Posterior vena cava (tissue), 2 donors: ENCODE measurements at regions of chr10 and their contacts with region 1.

Region 1: DNA sequence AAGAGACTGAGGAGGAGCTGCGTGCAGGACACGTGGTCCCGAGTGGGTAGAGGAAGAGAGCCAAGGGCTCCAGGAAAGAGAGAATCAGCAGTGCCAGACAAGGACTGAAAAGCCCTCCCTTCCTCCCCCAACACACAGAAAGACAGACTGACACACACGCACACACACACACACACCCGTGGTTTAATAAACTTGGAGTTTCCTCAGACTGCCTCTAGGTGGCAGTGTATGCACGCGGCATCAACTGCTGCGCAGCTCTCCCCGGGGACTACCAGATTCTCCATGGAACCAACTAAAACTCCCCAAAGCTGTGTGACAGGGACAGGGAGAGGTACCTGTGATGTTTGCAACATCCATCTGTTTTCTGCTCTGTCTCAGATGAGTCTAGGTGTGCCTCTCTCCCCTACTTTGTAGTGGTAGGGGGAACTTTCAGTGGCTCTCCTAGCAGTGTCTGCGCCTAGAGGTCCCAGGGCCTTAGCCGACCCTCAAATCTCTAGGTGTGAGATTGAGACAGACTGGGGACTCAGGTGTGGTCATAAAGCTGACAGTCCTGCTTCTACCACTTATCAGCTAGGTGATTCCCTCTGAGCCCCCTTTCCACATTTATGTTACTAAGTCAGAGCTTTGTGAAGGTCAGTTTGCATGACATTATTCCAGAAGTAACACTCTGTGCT is 9.3 kb upstream of the TSPAN14 start:
- DNase-seq: peak; percentile 89

Region 2: DNA sequence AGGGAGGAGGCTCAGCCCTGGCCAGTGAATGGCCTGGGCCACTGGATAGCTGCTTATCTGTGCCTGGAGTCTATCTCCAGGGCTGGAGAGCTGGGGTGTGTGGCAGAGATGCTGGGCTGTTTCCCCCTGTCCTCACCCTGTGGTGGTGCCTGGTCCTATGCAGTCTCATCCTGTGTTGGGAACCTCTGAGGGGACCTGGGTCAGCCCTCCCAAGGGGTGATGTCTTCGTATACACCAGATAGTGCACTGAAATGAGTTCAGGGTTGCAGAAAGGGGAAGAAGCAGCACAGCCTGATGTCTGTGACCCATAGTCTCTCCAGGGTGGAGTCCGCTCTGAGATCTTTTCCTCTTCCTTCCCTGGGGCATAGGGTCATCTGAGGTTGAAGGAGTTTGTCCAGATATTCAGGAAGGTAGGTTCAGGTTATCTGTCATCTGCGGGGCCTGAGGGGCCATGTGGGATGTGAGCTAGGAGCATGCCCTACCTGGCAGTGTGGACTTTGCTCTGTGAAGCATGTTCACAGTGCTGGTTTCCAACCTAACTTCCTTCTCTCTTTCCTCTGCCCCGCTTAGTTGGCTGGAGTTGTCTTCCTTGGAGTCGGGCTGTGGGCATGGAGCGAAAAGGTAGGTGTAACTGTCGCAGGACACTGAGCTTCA is 59.5 kb after region 1 on chr10:
- intact Hi-C with region 1: loop called (anchors 2 to 5 kb)
- DNase-seq: no peak

Region 3: GRCh38 chr10:80509403-80510161 is 64.8 kb after region 1 on chr10:
- intact Hi-C with region 1: loop called (anchors 2 to 5 kb)
- DNase-seq: no peak

Region 4: DNA sequence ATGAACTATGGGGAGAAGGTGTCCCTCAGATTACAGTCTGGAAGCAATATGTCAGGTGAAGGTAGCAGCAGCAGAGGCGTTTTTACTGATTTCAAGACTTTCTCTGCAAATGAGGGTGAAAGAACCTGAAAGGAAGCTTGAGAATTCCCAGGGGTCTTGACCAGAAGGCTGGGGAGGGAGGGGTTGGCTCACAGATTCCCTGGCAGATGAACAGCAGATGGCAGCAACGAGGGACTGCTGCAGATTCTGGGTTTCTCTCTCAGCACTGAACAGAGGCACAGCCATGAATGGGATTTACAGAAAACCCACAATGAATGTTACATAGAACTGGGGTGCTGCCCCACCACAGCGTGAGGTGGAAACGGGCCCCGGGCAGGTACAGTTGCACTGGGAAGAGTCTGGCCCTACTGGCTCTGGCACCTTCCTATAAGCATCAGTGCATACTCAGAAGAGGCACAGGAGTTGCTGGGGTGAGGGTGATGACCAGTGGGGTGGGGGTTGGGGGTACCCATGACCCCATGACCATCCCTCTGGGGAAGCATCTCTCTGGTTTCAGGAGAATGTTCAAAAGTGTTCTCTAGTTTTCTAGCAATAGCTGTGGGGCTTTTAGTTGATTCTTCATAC is 410.7 kb after region 1 on chr10:
- intact Hi-C with region 1: no loop called
- DNase-seq: no peak

Region 5: GRCh38 chr10:80924063-80924952 is 479.5 kb after region 1 on chr10:
- intact Hi-C with region 1: loop called in 1 of 2 experiments (anchors 10 kb)
- DNase-seq: no peak